ENCODE measurements at regions of chr10 and their contacts with region 1.

Region 1: DNA sequence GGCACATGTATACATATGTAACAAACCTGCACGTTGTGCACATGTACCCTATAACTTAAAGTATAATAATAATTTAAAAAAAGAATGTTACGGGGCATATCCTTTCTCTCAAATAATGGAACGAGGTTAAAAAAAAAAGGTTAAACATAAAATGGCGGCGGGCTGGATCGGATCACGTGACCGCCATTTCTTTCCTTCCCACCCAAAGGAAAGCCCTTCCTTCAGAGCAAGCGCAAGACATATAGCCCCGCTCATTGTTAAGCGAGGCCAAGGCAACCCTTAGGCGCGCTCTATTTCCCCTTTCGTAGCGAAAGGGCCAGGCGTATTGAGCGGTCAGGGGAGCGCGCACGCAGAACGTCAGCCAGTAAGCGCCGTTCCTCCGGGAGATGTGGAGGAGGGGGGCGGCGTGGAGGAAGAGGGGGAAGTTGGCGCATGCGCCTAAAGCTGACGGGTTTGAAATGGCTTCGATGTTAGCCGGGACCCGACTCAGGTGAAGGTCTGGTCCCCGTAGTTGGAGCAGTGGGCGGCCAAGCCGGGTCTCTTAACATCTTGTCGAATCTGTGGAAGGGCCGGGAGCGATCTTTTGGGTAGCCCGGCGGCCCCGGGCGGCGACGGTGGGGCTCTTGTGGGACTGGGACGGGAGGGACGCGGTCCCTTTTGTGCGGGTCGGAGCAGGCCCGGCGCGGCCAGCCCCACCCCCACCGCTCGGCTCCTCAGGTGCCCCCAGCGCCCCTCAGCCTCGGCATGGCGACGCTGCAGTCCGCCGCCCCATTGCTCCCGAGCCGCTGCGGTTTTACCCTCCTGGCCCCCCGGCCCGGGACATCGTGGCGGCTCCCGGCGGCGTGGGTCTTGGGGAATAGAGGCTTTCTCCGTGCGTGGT is at the start of gene CCAR1:
- DNase-seq: peak; percentile 99
- H3K4me3 Mint-ChIP-seq: peak within 1 kb of the TSS; percentile 93
- H3K27ac Mint-ChIP-seq: peak within 1 kb of the TSS; percentile 99
- H3K4me1 Mint-ChIP-seq: peaks cover 8% of the 10 kb centered on the region
- H3K27me3 Mint-ChIP-seq: no peaks in the 10 kb centered on the region
- CTCF ChIP-seq: no peak
- total RNA-seq, gene CCAR1: 103 and 116 TPM in 2 replicates

Region 2: GRCh38 chr10:68406815-68407548 is 314.1 kb before region 1 on chr10 and contains the start of gene RUFY2:
- CTCF ChIA-PET with region 1: interaction called, 3 read pairs
- POLR2A ChIA-PET with region 1: interaction called, 4 read pairs
- intact Hi-C with region 1: loop called (anchors 5 kb)
- DNase-seq: peak; percentile 68
- H3K4me3 Mint-ChIP-seq: peak within 1 kb of the TSS; percentile 86
- H3K27ac Mint-ChIP-seq: peak within 1 kb of the TSS; percentile 28
- H3K4me1 Mint-ChIP-seq: peaks cover 11% of the 10 kb centered on the region
- H3K27me3 Mint-ChIP-seq: no peaks in the 10 kb centered on the region
- CTCF ChIP-seq: peak; percentile 78
- total RNA-seq, gene RUFY2: 25.9 and 32.0 TPM in 2 replicates

Region 3: DNA sequence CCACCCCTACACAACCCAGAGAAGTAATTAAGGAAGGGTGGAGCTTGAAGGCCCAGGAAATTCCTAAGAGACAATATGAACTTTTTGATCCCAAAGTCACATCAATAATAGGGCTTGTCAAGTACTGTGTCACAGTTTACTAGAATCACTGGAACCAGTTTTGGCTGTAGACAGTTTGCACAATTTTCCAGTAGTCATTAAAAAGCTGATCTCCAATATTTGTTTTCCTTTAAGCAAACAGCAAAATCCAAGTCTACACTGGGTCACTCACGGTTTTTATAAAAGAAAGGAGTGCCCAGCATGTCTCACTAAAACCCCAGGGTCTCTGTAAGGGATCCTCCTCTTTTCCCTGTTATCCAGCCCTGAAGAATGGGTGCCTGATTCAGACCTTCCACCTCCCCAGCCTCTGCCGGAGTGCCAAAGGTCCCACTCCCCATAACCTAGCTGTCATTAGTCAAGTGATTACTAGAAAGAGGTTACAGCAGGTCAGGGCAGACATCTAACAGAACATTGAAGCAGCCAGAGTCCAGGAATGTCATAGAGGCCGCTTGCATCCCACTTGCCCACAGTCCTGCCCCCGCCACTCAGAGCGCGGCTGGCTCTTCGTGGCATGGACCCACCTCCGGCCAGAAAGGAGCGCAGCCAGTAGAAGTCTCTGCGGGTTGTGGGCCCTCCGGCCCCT is 194.3 kb before region 1 on chr10:
- CTCF ChIA-PET with region 1: no interaction called
- POLR2A ChIA-PET with region 1: interaction called, 9 read pairs
- intact Hi-C with region 1: loop called (anchors 1 kb)
- DNase-seq: no peak
- H3K4me3 Mint-ChIP-seq: peak overlapping the region; percentile 85
- H3K27ac Mint-ChIP-seq: peak overlapping the region; percentile 91
- H3K4me1 Mint-ChIP-seq: no peaks in the 10 kb centered on the region
- H3K27me3 Mint-ChIP-seq: no peaks in the 10 kb centered on the region
- CTCF ChIP-seq: no peak

Region 4: DNA sequence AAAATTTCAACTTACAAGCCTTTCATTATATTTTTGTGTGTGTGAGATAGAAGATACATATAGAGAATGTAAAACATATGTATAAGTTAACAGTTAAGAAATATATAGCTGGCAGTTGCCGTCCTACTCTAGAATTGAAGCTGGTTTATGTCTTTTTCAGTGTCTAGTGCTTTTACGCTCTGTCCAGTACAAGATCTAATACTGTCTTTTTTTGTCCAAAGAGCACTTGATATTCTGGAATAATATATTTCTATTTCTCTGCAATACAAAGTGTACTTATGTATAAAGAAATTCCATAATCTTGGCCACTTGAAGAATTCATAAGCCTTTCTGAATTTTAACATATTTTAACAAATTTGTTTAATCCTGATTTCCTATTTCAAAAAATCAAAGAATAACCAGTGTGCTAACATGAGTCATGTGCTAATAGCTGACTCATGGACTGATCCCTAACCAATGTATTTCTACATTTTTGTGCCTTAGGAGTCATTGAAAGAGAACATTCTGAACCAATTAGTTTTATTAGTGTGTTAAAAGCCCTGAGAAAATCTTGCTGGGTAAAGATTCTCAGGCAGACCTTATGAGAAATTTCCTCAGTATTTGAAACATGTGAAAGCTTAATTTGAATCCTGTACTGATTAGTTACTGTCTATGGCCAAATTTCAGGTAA is 73.2 kb before region 1 on chr10:
- CTCF ChIA-PET with region 1: no interaction called
- POLR2A ChIA-PET with region 1: interaction called, 3 read pairs
- intact Hi-C with region 1: loop called (anchors 2 kb)
- DNase-seq: peak; percentile 72
- H3K4me3 Mint-ChIP-seq: peak overlapping the region; percentile 2
- H3K27ac Mint-ChIP-seq: peak overlapping the region; percentile 93
- H3K4me1 Mint-ChIP-seq: peaks cover 21% of the 10 kb centered on the region
- H3K27me3 Mint-ChIP-seq: no peaks in the 10 kb centered on the region
- CTCF ChIP-seq: no peak

Region 5: DNA sequence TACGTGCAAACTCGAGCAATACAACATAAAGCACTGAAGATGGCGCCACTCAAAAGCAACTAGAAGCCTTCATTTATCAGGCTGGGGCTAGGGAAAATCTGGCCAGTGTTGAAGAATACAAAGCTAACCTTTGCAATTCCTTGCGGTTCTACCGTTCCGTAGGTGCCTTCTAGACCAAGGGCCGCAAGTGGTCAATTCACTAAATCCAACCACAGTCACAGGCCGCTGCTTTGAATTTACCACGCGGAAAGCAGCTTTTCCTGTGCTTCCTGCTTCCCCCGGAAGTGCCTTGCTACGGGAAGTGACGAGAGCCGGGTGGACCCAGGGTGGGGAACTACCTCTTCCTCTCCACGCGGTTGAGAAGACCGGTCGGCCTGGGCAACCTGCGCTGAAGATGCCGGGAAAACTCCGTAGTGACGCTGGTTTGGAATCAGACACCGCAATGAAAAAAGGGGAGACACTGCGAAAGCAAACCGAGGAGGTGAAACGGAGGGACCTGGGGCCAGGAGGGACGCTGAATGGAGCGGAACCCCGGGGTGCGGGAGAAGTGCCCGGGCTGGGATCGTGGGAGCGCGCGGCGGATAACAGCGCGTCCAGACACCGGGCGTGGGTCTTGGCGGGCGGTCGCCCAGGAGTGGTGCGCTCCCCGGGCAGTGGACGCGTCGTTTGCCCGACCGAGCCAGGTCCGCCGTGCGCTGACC is 234.9 kb after region 1 on chr10 and contains the start of gene DDX21:
- CTCF ChIA-PET with region 1: no interaction called
- POLR2A ChIA-PET with region 1: interaction called, 12 read pairs
- intact Hi-C with region 1: no loop called
- DNase-seq: peak; percentile 93
- H3K4me3 Mint-ChIP-seq: peak within 1 kb of the TSS; percentile 100
- H3K27ac Mint-ChIP-seq: peak within 1 kb of the TSS; percentile 100
- H3K4me1 Mint-ChIP-seq: peaks cover 8% of the 10 kb centered on the region
- H3K27me3 Mint-ChIP-seq: no peaks in the 10 kb centered on the region
- CTCF ChIP-seq: peak; percentile 41
- total RNA-seq, gene DDX21: 144 and 216 TPM in 2 replicates